AG04450 (cell line): ENCODE measurements at regions of chr7 and their contacts with region 1.

Region 1: DNA sequence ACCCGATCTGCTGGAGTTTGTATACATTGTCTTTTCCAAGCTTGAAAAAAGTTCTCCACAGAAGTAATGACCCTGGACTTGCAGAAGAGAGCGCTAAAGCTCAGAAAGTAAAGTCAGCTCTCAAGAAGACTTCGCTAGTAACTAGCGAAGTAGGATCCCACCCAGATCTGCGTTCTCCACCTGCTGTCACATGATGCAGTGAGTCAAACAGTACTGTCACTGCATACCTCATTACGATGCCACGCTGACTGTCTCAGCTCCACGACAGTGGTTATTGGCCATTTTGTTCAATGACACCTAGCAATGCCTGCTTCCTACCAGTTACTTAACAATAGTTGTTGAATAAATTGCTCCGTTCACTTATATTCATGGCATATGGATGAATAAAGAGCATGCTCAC is 29.7 kb upstream of the SEC61G start:
- DNase-seq: peak; percentile 81
- H3K4me3 ChIP-seq: no peak overlapping the region; the same call in 1 of the 2 replicates
- H3K27ac ChIP-seq: no peak overlapping the region
- H3K27me3 ChIP-seq: no peaks in the 10 kb centered on the region
- CTCF ChIP-seq: peak; percentile 84

Region 2: GRCh38 chr7:54839538-54840213 is 51.0 kb after region 1 on chr7:
- CTCF ChIA-PET with region 1: interaction called, 25 read pairs
- POLR2A ChIA-PET with region 1: no interaction called
- DNase-seq: no peak
- H3K4me3 ChIP-seq: no peak overlapping the region
- H3K27ac ChIP-seq: no peak overlapping the region
- H3K27me3 ChIP-seq: no peaks in the 10 kb centered on the region
- CTCF ChIP-seq: peak; percentile 67

Region 3: GRCh38 chr7:55018361-55019190 is 229.9 kb after region 1 on chr7 and contains the start of gene EGFR:
- CTCF ChIA-PET with region 1: interaction called, 18 read pairs
- POLR2A ChIA-PET with region 1: interaction called, 3 read pairs
- DNase-seq: peak; percentile 34
- H3K4me3 ChIP-seq: peak within 1 kb of the TSS; percentile 77
- H3K27ac ChIP-seq: peak within 1 kb of the TSS; percentile 47
- H3K27me3 ChIP-seq: no peaks in the 10 kb centered on the region
- CTCF ChIP-seq: no peak
- polyA plus RNA-seq, gene EGFR: 59.0 and 62.6 TPM in 2 replicates